Astrocyte of the cerebellum (primary cell): ENCODE measurements at regions of chr15 and their contacts with region 1.

Region 1: GRCh38 chr15:40906091-40906990 is 12.1 kb downstream of the VPS18 start:
- DNase-seq: peak; percentile 94
- H3K4me3 ChIP-seq: peak overlapping the region; percentile 37
- CTCF ChIP-seq: peak; percentile 73

Region 2: GRCh38 chr15:41024885-41025284 is 118.5 kb after region 1 on chr15:
- in situ Hi-C with region 1: loop called (anchors 5 kb)
- DNase-seq: no peak
- H3K4me3 ChIP-seq: no peak overlapping the region
- CTCF ChIP-seq: no peak

Region 3: DNA sequence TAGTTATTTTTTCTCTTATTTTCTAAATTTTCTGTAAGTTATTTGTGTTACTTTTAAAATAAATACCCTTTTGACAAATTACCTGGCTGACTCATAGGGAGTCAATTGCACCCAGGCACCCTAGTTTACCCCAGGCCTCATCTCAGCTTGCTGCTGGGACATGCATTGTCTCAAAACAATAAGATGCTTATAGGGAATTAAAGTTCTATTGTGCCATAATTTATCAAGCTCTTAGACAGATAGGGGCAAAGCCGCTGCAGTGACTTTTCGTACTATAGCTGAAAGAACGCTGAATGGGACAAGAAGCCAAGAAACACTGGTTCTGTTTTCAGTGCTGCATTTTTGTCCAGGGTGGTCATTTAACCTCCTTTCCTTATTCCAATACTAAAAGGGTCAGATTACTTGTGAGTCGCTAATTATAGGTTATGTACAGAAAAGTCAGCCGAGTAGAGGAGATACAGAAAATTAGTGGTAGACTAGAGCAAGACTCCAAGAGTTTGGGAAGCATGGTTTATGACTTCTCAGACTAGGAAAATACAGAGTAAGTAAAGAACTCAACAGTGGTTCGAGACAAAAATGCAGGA is 274.0 kb after region 1 on chr15:
- in situ Hi-C with region 1: loop called (anchors 5 kb)
- DNase-seq: no peak
- H3K4me3 ChIP-seq: no peak overlapping the region
- CTCF ChIP-seq: no peak